H1 (cell line): ENCODE measurements at regions of chr7 and their contacts with region 1.

Region 1: DNA sequence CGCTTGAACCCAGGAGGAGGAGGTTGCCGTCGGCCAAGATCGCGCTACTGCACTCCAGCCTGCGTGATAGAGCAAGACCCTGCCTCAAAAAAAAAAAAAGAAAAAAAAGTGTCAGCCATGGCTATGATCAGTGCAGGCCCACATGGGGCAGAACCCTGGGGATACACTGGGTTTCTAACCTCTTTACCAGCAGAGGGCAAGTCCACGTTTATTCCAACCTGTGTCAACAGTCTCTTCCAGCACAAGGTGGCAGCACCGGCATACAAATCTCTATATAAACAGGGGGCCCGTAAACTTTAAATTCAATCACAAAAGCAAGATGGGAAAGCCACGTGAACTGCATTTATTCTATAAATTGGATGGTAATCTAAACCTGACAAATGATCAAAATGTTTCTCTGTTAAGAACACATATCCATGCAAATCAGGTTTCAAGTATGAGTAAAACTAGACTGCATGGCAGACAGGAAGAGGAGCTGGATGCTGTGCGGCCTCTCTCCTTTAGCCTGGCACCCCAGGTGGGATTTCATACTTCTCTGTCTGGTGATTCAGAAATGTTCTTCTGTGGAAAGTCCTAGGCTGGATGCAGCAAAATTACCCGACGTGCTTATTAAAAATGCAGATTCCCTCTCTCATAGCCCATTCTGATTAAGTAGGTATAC is 60.0 kb upstream of the STEAP1B start:
- DNase-seq: peak in 1 of 2 experiments; percentile 73
- H3K4me3 ChIP-seq: no peak overlapping the region
- H3K27ac ChIP-seq: no peak overlapping the region
- H3K4me1 ChIP-seq: peaks cover 8 to 34% (median 25%) of the 10 kb centered on the region in 4 experiments
- H3K27me3 ChIP-seq: no peaks in the 10 kb centered on the region
- CTCF ChIP-seq: peak; percentile 63 to 99 (median 91)
- EP300 ChIP-seq: no peak
- POLR2A ChIP-seq: no peak
- RAD21 ChIP-seq: peak; percentile 94 to 98

Region 2: DNA sequence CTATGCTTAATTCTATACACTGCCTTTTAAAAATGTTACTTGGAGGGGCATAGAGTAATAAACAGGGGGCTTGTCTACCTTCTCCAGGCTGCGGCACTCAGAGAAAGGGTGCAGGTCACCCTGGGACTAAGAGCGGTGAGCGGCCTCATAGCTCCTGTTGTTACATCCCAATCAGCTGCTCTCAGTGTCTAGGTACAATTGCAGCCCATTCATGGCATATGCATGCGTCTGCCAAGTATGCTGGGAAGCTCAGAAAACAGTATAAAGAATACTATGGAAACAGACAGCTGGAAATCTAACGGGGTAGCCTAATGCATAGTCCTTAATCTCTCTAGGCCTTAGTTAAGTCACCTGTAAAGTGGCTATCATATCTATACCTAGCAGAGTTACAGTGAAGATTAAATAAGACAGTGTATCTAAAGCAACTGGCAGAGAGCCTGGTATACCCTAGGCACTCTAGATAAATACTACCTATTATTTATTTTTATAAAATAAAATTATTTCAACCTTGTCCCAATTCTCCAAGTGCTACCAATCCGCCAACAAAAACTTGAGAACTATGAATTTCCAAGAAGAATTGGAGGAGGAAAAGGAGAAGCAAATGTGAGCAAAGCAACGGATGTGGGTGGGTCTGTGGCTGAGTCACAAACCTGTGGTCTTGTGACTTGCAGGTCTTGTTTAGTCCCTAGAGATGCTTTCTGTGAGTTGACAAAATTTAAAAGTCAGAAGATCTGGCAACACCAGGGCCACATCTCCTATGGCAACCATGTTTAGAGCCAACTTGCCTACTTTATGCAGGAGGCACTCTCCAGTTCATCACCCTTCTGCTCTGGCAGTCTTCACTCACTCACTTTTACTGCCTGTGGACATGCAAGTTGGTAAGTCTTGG is 386.0 kb before region 1 on chr7:
- CTCF ChIA-PET with region 1: no interaction called
- POLR2A ChIA-PET with region 1: no interaction called
- DNase-seq: no peak
- H3K4me3 ChIP-seq: no peak overlapping the region
- H3K27ac ChIP-seq: no peak overlapping the region
- H3K4me1 ChIP-seq: peaks cover 0 to 5% (median 0%) of the 10 kb centered on the region in 4 experiments; a peak in 1 of 7 replicates
- H3K27me3 ChIP-seq: no peaks in the 10 kb centered on the region
- CTCF ChIP-seq: no peak
- EP300 ChIP-seq: no peak
- POLR2A ChIP-seq: no peak
- RAD21 ChIP-seq: no peak

Region 3: GRCh38 chr7:22586786-22587140 is 26.8 kb after region 1 on chr7:
- CTCF ChIA-PET with region 1: interaction called, 100 read pairs
- POLR2A ChIA-PET with region 1: interaction called, 18 read pairs
- DNase-seq: no peak
- H3K4me3 ChIP-seq: no peak overlapping the region
- H3K27ac ChIP-seq: no peak overlapping the region
- H3K4me1 ChIP-seq: peaks cover 4 to 22% (median 13%) of the 10 kb centered on the region in 4 experiments; a peak in 6 of 7 replicates
- H3K27me3 ChIP-seq: no peaks in the 10 kb centered on the region
- CTCF ChIP-seq: peak; percentile 10 to 64 (median 52)
- EP300 ChIP-seq: 0 out of 3 replicates have a peak, but pooled peaks of 1 of the 2 experiments have one; percentile 31
- POLR2A ChIP-seq: no peak
- RAD21 ChIP-seq: peak; percentile 43 to 55; a peak in 3 of 4 replicates

Region 4: DNA sequence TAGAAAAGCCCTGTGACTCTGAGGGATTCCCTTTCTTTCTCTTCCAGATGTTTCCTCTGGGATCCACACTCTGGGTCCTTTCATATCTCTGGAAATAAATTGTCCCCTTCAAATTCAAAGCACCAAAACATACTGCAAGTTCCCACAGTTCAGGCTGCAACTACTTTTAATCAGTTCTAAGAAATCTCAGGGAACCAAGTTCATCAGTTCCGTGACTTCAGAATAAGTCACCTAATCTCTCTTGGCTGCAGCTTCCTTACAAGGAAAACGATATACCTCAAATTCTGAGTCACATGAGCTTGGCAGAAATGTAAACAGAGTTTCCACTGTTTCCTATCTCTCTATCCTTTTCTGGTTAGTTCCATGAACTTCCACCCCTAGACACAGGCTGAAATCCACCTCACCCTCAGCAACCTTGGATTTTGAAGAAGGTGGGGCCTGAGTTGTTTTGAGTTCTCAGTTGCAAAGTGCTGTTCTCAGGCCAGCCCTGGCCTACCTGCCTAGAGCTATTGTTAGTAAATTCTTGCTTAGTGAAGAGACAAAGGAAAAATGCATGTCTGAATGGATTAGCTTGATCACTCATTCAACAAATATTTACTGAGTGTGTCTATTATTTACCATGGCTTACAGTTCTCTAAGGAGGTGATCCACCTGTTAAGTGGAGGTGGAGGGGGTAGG is 107.7 kb after region 1 on chr7:
- CTCF ChIA-PET with region 1: interaction called, 23 read pairs
- POLR2A ChIA-PET with region 1: interaction called, 7 read pairs
- DNase-seq: peak in 1 of 2 experiments; percentile 75
- H3K4me3 ChIP-seq: no peak overlapping the region
- H3K27ac ChIP-seq: peak overlapping the region; percentile 26; the same call in 1 of the 2 replicates
- H3K4me1 ChIP-seq: peaks cover 5 to 20% (median 14%) of the 10 kb centered on the region in 4 experiments
- H3K27me3 ChIP-seq: no peaks in the 10 kb centered on the region
- CTCF ChIP-seq: no peak
- EP300 ChIP-seq: peak in 1 of 2 experiments; percentile 47; a peak in 1 of 3 replicates
- POLR2A ChIP-seq: no peak
- RAD21 ChIP-seq: no peak

Region 5: GRCh38 chr7:22726345-22727185 is 166.6 kb after region 1 on chr7:
- CTCF ChIA-PET with region 1: interaction called, 385 read pairs
- POLR2A ChIA-PET with region 1: interaction called, 52 read pairs
- DNase-seq: peak in 1 of 2 experiments; percentile 62
- H3K4me3 ChIP-seq: peak overlapping the region in 1 of 4 experiments; percentile 22; a peak in 1 of 8 replicates
- H3K27ac ChIP-seq: no peak overlapping the region
- H3K4me1 ChIP-seq: peaks cover 4 to 9% (median 5%) of the 10 kb centered on the region in 4 experiments
- H3K27me3 ChIP-seq: peaks cover 0 to 3% (median 0%) of the 10 kb centered on the region in 4 experiments; a peak in 2 of 7 replicates
- CTCF ChIP-seq: peak; percentile 66 to 89 (median 85)
- EP300 ChIP-seq: no peak
- POLR2A ChIP-seq: no peak
- RAD21 ChIP-seq: peak; percentile 85 to 90

Region 6: DNA sequence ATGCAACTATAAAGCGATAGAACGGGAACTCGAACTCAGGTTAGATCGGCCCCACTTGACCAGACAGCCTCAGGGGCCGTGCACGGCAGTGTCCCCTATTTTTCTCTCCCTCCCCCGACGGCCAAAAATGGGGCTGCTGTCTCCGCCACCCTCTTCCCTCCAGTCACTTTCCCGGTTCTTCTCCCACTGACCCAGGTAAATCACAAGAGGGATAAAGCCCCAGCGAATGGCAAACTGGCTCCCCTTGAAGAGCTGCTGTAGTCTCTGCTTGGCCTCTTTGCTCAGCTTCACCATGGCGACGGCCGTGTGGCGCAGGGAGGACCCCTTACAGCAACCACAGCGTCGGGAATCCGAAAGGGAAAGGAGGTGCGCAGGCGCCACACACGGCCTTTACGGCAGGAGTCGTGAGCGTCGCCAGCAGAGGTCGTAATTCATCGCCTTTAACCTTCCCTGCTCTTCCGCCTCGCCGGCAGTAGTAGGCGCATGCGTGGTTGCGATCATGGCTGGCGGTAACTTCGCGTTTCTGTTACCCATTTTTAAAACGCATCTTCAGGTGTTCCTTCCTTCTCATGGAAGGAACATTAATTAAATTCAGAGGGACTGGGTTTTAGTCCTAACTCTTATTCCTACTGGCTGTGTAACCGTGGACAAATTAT is 262.7 kb after region 1 on chr7 and contains the start of gene TOMM7:
- CTCF ChIA-PET with region 1: interaction called, 10 read pairs
- POLR2A ChIA-PET with region 1: interaction called, 7 read pairs
- DNase-seq: peak; percentile 84 to 95
- H3K4me3 ChIP-seq: peak within 1 kb of the TSS; percentile 92 to 97 (median 94)
- H3K27ac ChIP-seq: peak within 1 kb of the TSS; percentile 74
- H3K4me1 ChIP-seq: peaks cover 0 to 12% (median 6%) of the 10 kb centered on the region in 4 experiments; a peak in 5 of 7 replicates
- H3K27me3 ChIP-seq: no peaks in the 10 kb centered on the region
- CTCF ChIP-seq: peak in 2 of 3 experiments; percentile 46 to 50; a peak in 2 of 4 replicates
- EP300 ChIP-seq: no peak
- POLR2A ChIP-seq: peak; percentile 69 to 89
- RAD21 ChIP-seq: peak in 1 of 2 experiments; percentile 13; a peak in 3 of 4 replicates
- total RNA-seq, gene TOMM7: 389 and 406 TPM in 2 replicates